Posterior vena cava (tissue), 2 donors: ENCODE measurements at regions of chr11 and their contacts with region 1.

Region 1: GRCh38 chr11:7571640-7572000 is 57.8 kb downstream of the PPFIBP2 start:
- DNase-seq: peak; percentile 84

Region 2: GRCh38 chr11:7513234-7514098 is 58.2 kb before region 1 on chr11 and contains the start of gene PPFIBP2:
- intact Hi-C with region 1: loop called in 1 of 2 experiments (anchors 10 kb)
- DNase-seq: peak; percentile 94
- total RNA-seq, gene PPFIBP2: 13.8 to 24.6 TPM

Region 3: DNA sequence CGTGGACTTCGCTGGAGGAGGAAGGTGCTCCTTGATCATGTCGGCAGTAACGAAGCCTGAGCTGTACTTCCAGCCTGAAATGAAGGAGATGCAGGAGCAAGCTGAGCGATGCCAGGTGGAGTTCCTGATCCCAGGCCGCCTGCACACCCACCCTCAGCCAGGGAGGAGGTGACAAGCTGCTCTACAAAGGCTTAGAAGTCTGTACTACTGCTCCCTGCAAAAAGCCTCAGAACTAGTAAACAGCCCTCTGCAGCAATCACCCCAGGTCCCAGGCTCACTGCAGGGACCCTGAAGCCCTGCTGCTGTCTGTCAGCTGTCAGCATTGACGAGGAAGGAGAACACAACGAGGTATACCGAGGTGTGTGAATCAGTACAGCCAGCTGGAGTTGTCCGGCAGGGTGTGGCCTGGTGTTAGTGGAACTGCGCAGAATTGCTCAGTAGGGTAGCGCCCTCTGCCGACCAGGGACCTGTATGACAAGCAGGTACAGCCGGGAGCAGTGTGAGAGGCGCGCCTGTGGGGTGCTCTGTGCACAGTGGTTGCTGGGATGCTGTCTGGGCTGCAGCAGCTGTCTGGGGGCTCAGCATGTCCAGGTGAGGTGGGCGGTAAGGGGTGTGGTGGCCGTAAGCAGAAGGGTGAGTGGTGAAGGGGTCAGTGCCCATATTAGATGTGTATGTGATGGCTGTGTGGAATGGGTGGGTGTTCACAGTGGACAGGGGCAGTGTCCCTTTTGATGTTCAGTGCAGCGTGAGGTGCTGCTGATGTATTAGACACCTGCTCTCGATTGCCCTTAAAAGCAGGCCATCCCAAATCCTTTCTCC is 94.1 kb after region 1 on chr11:
- intact Hi-C with region 1: loop called in 1 of 2 experiments (anchors 2 kb)
- DNase-seq: peak; percentile 94

Region 4: DNA sequence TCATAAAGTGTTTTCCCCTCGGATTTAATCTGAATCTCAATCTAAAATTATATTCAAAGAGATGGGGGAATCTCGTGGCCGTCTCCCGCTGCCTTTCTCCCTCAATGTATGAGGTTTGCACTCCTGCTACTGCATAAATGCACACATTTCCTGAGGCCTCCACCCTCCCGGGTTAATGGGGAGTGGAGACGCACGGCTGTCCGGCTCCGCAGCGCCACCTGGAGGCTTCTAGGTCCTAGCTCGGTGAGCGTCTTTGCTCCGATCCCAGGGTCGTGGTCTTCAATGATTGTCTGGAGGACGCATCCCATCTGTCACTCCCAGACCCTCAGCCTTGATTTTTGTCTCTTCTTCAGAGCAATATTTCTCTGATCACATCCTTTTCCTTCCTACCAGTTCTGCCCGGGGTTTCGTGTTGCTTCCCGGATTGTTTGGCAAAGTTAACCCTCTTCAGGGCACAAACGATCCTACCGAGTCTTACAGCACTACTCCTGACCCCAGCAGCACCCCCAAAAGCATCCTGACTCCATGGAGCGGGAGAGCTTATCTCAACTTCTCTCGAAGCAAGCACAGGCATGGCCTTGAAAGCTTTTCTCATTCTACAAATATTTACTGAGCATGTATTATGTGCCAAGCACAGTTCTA is 692.3 kb after region 1 on chr11 and contains the start of gene LMO1:
- intact Hi-C with region 1: no loop called
- DNase-seq: peak; percentile 95
- total RNA-seq, gene LMO1: 0.38 TPM in 1 of 2 donors, not detected in the other